Psoas muscle (tissue), 8 donors: ENCODE measurements at regions of chr9 and their contacts with region 1.

Region 1: GRCh38 chr9:76810377-76810957 is 46.2 kb downstream of the PCA3 start:
- DNase-seq: no peak
- ATAC-seq: peak; percentile 64 to 79 (median 72)
- H3K4me3 ChIP-seq: no peak overlapping the region
- H3K27ac ChIP-seq: no peak overlapping the region
- H3K4me1 ChIP-seq: no peaks in the 10 kb centered on the region
- H3K27me3 ChIP-seq: peaks cover 0 to 5% (median 0%) of the 10 kb centered on the region in 3 donors
- CTCF ChIP-seq: peak; percentile 76

Region 2: GRCh38 chr9:76704593-76705204 is 105.8 kb before region 1 on chr9:
- intact Hi-C with region 1: no loop called
- DNase-seq: no peak
- ATAC-seq: peak; percentile 40 to 75 (median 52)
- H3K4me3 ChIP-seq: no peak overlapping the region
- H3K27ac ChIP-seq: no peak overlapping the region
- H3K4me1 ChIP-seq: no peaks in the 10 kb centered on the region
- H3K27me3 ChIP-seq: peaks cover 0 to 12% (median 2%) of the 10 kb centered on the region in 3 donors
- CTCF ChIP-seq: peak; percentile 70

Region 3: GRCh38 chr9:76859860-76860259 is 49.4 kb after region 1 on chr9:
- intact Hi-C with region 1: no loop called
- DNase-seq: no peak
- ATAC-seq: no peak
- H3K4me3 ChIP-seq: no peak overlapping the region
- H3K27ac ChIP-seq: no peak overlapping the region
- H3K4me1 ChIP-seq: no peaks in the 10 kb centered on the region
- H3K27me3 ChIP-seq: no peaks in the 10 kb centered on the region
- CTCF ChIP-seq: no peak

Region 4: GRCh38 chr9:76987594-76988200 is 177.2 kb after region 1 on chr9:
- intact Hi-C with region 1: loop called (anchors 5 to 10 kb)
- DNase-seq: no peak
- ATAC-seq: peak in 2 of 4 donors; percentile 59 to 63
- H3K4me3 ChIP-seq: no peak overlapping the region
- H3K27ac ChIP-seq: no peak overlapping the region
- H3K4me1 ChIP-seq: no peaks in the 10 kb centered on the region
- H3K27me3 ChIP-seq: peaks cover 0 to 11% (median 2%) of the 10 kb centered on the region in 3 donors
- CTCF ChIP-seq: peak; percentile 40

Region 5: DNA sequence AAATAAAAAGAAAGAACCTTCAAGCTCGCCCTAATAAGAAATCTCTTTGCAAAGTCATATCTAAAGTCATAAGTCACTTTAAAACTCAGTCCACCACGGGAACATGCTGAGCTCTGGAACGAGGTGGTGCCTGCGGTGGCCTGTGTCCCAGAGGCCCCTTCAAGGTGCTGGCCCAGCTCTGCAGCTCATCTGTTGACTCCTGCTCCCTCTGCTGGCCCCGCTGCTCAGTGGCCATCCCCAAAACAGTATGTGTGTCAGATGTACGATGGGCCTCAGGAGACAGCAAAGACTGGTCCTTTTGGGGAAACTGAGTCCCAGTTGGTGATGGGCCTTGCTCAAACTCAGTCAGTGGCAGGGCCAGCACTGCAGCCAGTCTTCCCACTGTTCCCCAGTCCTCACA is 186.2 kb after region 1 on chr9:
- intact Hi-C with region 1: loop called in 1 of 2 experiments (anchors 10 kb)
- DNase-seq: peak; percentile 33 to 51
- ATAC-seq: no peak
- H3K4me3 ChIP-seq: no peak overlapping the region
- H3K27ac ChIP-seq: no peak overlapping the region
- H3K4me1 ChIP-seq: no peaks in the 10 kb centered on the region
- H3K27me3 ChIP-seq: peaks cover 0 to 4% (median 3%) of the 10 kb centered on the region in 3 donors
- CTCF ChIP-seq: peak; percentile 40

Region 6: GRCh38 chr9:77011973-77012821 is 201.7 kb after region 1 on chr9:
- intact Hi-C with region 1: loop called in 1 of 2 experiments (anchors 10 kb)
- DNase-seq: peak; percentile 46 to 70
- ATAC-seq: peak; percentile 43 to 79 (median 64)
- H3K4me3 ChIP-seq: peak overlapping the region; percentile 26
- H3K27ac ChIP-seq: no peak overlapping the region
- H3K4me1 ChIP-seq: peaks cover 15% of the 10 kb centered on the region
- H3K27me3 ChIP-seq: peaks cover 23 to 92% (median 51%) of the 10 kb centered on the region in 3 donors
- CTCF ChIP-seq: peak; percentile 57

Region 7: DNA sequence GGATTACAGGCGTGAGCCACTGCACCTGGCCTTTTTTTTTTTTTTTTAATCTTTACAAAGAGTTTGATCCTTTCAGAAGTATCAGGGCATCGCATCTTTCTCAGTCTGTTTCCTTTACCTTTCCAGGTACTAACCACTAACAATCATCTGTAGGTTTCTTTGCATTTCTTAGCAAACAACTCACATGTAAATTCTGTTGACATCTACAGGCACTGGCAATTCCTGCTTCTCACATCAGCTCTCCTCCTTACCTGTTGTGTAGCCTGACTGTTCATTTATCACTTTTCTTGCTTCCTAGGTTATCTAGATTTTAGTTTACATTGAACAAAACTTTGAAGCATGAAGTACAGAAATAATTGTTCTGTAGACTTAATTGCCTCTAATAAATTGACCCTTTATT is 339.4 kb after region 1 on chr9:
- intact Hi-C with region 1: loop called (anchors 2 to 5 kb)
- DNase-seq: no peak
- ATAC-seq: no peak
- H3K4me3 ChIP-seq: no peak overlapping the region
- H3K27ac ChIP-seq: no peak overlapping the region
- H3K4me1 ChIP-seq: no peaks in the 10 kb centered on the region
- H3K27me3 ChIP-seq: no peaks in the 10 kb centered on the region
- CTCF ChIP-seq: no peak

Region 8: GRCh38 chr9:77271023-77271690 is 460.7 kb after region 1 on chr9:
- intact Hi-C with region 1: no loop called
- DNase-seq: no peak
- ATAC-seq: no peak
- H3K4me3 ChIP-seq: no peak overlapping the region
- H3K27ac ChIP-seq: no peak overlapping the region
- H3K4me1 ChIP-seq: no peaks in the 10 kb centered on the region
- H3K27me3 ChIP-seq: no peaks in the 10 kb centered on the region
- CTCF ChIP-seq: no peak